Gastrocnemius medialis (tissue), 4 donors: ENCODE measurements at regions of chr1 and their contacts with region 1.

Region 1: DNA sequence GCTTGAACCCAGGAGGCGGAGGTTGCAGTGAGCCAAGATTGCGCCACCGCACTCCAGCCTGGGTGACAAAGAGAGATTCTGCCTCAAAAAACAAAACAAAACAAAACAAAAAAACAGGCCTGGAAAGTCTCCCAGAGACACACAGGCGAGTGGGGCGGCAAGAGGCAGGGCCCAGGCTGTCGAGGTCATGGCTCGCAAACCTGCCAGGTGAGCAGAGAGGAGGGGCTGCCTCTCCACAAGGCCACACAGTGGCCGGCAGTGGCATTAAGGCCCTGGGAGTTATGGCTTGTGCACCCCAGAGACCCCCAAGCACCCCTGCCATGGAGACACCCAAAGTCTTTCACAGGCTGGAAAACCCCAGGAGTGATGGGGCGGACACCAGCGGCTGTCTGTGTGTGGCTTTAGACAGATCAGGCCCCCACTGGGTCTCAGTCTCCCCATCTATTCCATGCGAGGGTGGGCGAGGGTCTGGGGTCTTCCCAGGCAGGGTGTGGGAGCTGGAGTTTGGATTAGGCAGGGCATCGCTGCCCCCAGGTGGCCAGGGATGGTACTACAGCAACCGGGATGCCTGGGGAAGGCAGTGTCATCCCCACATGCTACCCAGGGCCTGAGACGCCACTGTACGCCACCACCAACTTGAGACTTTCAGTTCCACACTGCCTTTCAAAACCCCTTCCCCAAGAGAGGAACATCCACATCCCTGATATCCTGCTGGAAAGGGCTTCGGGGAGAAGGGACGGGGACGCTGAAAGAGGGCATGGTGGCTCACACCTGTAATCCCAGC is 7.3 kb upstream of the CTRC start:
- DNase-seq: peak in 1 of 2 donors; percentile 40
- ATAC-seq: peak in 1 of 2 donors; percentile 60
- H3K4me3 ChIP-seq: no peak overlapping the region
- H3K27ac ChIP-seq: no peak overlapping the region
- H3K4me1 ChIP-seq: no peaks in the 10 kb centered on the region
- H3K27me3 ChIP-seq: no peaks in the 10 kb centered on the region
- CTCF ChIP-seq: peak; percentile 88 to 94 (median 91)
- POLR2A ChIP-seq: no peak

Region 2: DNA sequence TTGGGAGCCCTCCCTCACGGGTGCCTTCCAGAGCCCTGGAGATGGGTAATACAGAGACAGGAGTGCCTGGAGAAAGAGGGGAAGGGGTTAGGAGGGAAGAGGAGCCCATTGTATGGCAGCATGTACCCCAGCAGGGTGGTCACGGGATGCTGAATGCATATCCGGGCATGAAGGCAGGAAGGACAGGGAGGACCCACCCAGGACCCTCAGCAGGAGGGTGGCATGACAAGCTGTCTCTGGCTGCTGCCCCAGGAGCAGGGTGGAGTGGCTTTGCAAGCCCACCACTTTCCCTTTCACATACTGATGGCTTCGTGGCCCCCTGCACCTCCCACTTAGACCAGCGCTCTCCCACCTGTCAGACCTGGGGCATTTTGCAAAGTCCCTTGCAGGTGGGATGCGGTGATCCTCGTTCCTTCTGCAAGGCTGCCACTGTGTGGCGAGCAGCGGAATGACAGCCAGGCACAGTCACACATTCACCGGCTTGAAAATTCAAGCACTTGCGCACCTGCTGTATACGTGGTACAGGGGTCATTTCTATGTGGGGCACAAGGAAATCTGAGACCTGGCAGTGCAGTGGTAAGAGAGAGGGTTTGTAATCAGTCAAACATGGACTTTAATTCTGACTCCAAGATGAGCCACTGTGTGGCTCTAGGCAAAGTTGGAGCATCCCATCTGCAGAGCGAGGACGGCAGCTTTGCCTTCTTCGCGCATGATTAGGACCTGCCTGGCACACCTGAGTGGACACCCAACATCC is 330.7 kb before region 1 on chr1:
- in situ Hi-C with region 1: loop called in 1 of 4 experiments (anchors 25 kb)
- intact Hi-C with region 1: no loop called
- DNase-seq: no peak
- ATAC-seq: no peak
- H3K4me3 ChIP-seq: no peak overlapping the region
- H3K27ac ChIP-seq: no peak overlapping the region
- H3K4me1 ChIP-seq: no peaks in the 10 kb centered on the region
- H3K27me3 ChIP-seq: no peaks in the 10 kb centered on the region
- CTCF ChIP-seq: peak; percentile 25 to 67 (median 49)
- POLR2A ChIP-seq: no peak

Region 3: GRCh38 chr1:15128520-15129313 is 302.3 kb before region 1 on chr1:
- in situ Hi-C with region 1: loop called in 2 of 4 experiments (anchors 25 kb)
- intact Hi-C with region 1: no loop called
- DNase-seq: peak; percentile 11 to 17
- ATAC-seq: peak in 1 of 2 donors; percentile 53
- H3K4me3 ChIP-seq: no peak overlapping the region
- H3K27ac ChIP-seq: no peak overlapping the region
- H3K4me1 ChIP-seq: no peaks in the 10 kb centered on the region
- H3K27me3 ChIP-seq: no peaks in the 10 kb centered on the region
- CTCF ChIP-seq: peak; percentile 19 to 73 (median 58)
- POLR2A ChIP-seq: no peak

Region 4: GRCh38 chr1:15311880-15312279 is 119.1 kb before region 1 on chr1:
- in situ Hi-C with region 1: loop called in 2 of 4 experiments (anchors 5 to 10 kb)
- intact Hi-C with region 1: no loop called
- DNase-seq: no peak
- ATAC-seq: no peak
- H3K4me3 ChIP-seq: no peak overlapping the region
- H3K27ac ChIP-seq: no peak overlapping the region
- H3K4me1 ChIP-seq: no peaks in the 10 kb centered on the region
- H3K27me3 ChIP-seq: no peaks in the 10 kb centered on the region
- CTCF ChIP-seq: no peak
- POLR2A ChIP-seq: no peak

Region 5: DNA sequence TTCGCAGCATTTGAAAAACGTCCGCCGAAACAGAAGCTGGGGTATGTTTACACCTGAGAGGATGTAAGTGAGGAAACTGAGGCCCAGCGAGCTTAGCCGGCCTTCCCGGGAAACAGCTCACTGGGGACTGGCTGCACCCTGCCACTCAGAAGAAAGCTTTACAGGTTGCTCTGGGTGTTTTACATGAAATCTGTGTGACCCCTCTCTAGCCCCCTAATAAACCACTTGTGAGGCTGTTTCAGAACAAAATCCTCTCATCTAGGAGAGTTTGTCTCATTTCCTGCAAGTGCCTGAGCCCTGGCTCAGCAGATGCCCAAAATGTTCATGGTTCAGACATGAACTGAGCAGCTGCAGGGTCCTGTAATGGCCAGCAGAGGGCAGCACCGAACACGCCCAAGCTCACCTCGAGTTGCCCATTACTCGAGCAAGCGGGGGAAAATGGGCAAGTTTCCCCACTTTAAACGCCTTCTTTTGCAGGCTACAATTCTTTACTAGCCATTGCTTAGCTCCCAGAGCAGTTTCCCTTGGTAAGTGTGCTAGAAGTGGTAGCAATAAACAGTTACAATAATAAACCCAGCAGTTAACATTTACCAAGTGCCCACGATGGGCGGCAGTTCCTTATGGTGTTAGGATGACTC is 107.5 kb before region 1 on chr1:
- in situ Hi-C with region 1: loop called (anchors 5 to 10 kb)
- intact Hi-C with region 1: loop called (anchors 1 kb)
- DNase-seq: peak; percentile 35 to 49
- ATAC-seq: peak; percentile 71 to 72
- H3K4me3 ChIP-seq: no peak overlapping the region
- H3K27ac ChIP-seq: no peak overlapping the region
- H3K4me1 ChIP-seq: peaks cover under 1 to 3% of the 10 kb centered on the region in 2 donors
- H3K27me3 ChIP-seq: peaks cover 0 to 3% (median 0%) of the 10 kb centered on the region in 3 donors
- CTCF ChIP-seq: peak; percentile 80 to 98 (median 89)
- POLR2A ChIP-seq: no peak

Region 6: GRCh38 chr1:15328351-15329103 is 102.5 kb before region 1 on chr1:
- in situ Hi-C with region 1: loop called in 2 of 4 experiments (anchors 5 kb)
- intact Hi-C with region 1: loop called (anchors 1 kb)
- DNase-seq: peak; percentile 14 to 25
- ATAC-seq: peak; percentile 47 to 50
- H3K4me3 ChIP-seq: no peak overlapping the region
- H3K27ac ChIP-seq: peak overlapping the region in 2 of 4 donors; percentile 8 to 17
- H3K4me1 ChIP-seq: peaks cover 13 to 17% of the 10 kb centered on the region in 2 donors
- H3K27me3 ChIP-seq: peaks cover 0 to 4% (median 0%) of the 10 kb centered on the region in 3 donors
- CTCF ChIP-seq: no peak
- POLR2A ChIP-seq: no peak

Region 7: DNA sequence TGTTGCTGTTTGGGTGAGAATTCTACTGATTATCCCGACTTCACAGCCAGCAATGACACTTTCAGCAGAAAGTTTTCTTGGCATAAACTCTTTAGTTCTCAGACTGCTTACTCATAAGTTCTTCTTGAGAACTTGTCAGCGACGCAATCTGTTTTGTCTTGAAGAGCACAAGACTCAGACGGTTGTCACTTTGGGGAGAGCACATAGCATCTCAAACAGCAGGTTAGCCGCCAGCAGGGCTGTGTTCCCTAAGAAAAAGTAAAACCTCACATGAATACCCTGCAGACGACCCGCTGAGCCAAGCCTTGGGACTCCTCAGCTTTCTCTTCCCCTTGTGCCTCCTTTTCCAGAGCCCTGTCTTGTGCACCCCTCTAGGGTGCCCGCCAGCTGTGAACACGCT is 142.5 kb after region 1 on chr1:
- in situ Hi-C with region 1: no loop called
- intact Hi-C with region 1: no loop called
- DNase-seq: no peak
- ATAC-seq: peak in 1 of 2 donors; percentile 53
- H3K4me3 ChIP-seq: no peak overlapping the region
- H3K27ac ChIP-seq: peak overlapping the region; percentile 18 to 95 (median 82)
- H3K4me1 ChIP-seq: peaks cover 18 to 20% of the 10 kb centered on the region in 2 donors
- H3K27me3 ChIP-seq: no peaks in the 10 kb centered on the region
- CTCF ChIP-seq: no peak
- POLR2A ChIP-seq: no peak